SK-N-SH (cell line): ENCODE measurements at regions of chr1 and their contacts with region 1.

Region 1: GRCh38 chr1:109099938-109100773 is 9.6 kb downstream of the TMEM167B start:
- DNase-seq: peak; percentile 96
- H3K4me3 ChIP-seq: peak overlapping the region; percentile 71 to 81
- H3K27ac ChIP-seq: peak overlapping the region; percentile 86 to 92
- H3K4me1 ChIP-seq: no peaks in the 10 kb centered on the region; a peak in 1 of 4 replicates
- H3K27me3 ChIP-seq: no peaks in the 10 kb centered on the region
- CTCF ChIP-seq: peak; percentile 85
- EP300 ChIP-seq: peak; percentile 3 to 64; a peak in 3 of 4 replicates
- RAD21 ChIP-seq: peak; percentile 58

Region 2: GRCh38 chr1:108691942-108692723 is 408.0 kb before region 1 on chr1 and contains the start of gene PRPF38B:
- CTCF ChIA-PET with region 1: interaction called, 6 read pairs
- POLR2A ChIA-PET with region 1: interaction called, 13 read pairs
- DNase-seq: peak; percentile 93
- H3K4me3 ChIP-seq: peak within 1 kb of the TSS; percentile 97 to 98
- H3K27ac ChIP-seq: peak within 1 kb of the TSS; percentile 96 to 99
- H3K4me1 ChIP-seq: peaks cover 11 to 16% of the 10 kb centered on the region in 2 experiments; a peak in 3 of 4 replicates
- H3K27me3 ChIP-seq: no peaks in the 10 kb centered on the region
- CTCF ChIP-seq: no peak
- EP300 ChIP-seq: no peak
- RAD21 ChIP-seq: no peak; the same call in 1 of the 2 replicates
- polyA plus RNA-seq, gene PRPF38B: 17.5 and 22.3 TPM in 2 replicates

Region 3: DNA sequence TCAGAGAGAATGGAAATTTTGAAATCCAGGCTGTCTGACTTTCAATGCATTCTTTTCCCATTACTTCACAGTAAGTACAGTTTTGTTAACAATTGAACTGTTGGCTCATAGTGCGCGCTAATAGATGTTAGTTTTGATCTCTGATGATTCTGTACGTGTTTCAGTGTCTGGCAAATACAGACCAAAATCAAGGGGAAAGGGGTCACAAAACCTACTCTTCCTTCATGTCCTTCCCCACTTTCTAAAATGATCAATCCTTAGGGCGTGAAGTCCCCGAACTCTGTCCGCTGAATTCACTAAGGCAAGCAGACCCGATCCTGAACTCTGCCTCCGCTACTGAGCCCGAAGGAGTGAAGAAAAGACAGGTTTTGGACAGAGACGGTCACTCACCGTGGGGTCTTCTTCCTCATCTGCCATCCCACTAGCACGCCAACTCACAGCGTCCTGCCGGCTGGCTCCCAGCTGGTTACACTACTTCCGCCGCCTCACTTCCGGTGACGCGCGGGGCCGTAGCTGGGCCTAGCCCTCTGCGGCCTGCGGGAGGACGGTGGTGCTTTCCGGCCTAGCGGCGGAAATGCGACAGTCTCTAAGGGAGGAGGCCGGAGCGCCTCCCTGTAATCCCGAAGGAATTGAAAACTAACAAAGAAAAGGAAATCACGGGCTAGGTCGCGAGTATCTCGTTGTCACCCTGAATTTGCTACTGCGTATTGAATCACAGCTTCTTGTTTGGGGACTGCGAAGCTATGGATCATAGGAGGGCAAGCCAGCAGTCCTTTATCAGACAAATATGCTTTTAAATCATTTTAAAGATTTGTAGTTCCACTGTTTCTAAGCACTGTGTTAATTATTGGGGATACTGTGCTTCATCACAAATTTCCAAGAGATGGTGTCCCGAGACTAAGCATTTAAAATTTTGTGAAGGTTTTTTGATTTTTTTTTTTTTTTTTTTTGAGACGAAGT is 24.3 kb before region 1 on chr1 and contains the start of gene TAF13:
- CTCF ChIA-PET with region 1: interaction called, 6 read pairs
- POLR2A ChIA-PET with region 1: interaction called, 28 read pairs
- DNase-seq: peak; percentile 96
- H3K4me3 ChIP-seq: peak within 1 kb of the TSS; percentile 81 to 83
- H3K27ac ChIP-seq: peak within 1 kb of the TSS; percentile 95 to 97
- H3K4me1 ChIP-seq: no peaks in the 10 kb centered on the region; a peak in 2 of 4 replicates
- H3K27me3 ChIP-seq: no peaks in the 10 kb centered on the region
- CTCF ChIP-seq: peak; percentile 22
- EP300 ChIP-seq: peak in 1 of 2 experiments; percentile 19; a peak in 1 of 4 replicates
- RAD21 ChIP-seq: no peak
- polyA plus RNA-seq, gene TAF13: 16.0 and 21.9 TPM in 2 replicates

Region 4: GRCh38 chr1:109112652-109113285 is 12.6 kb after region 1 on chr1:
- CTCF ChIA-PET with region 1: interaction called, 75 read pairs
- POLR2A ChIA-PET with region 1: interaction called, 19 read pairs
- DNase-seq: peak; percentile 93
- H3K4me3 ChIP-seq: peak overlapping the region; percentile 37 to 57
- H3K27ac ChIP-seq: no peak overlapping the region
- H3K4me1 ChIP-seq: peaks cover 4 to 13% of the 10 kb centered on the region in 2 experiments; a peak in 1 of 4 replicates
- H3K27me3 ChIP-seq: peaks cover 16% of the 10 kb centered on the region
- CTCF ChIP-seq: peak; percentile 96
- EP300 ChIP-seq: no peak
- RAD21 ChIP-seq: peak; percentile 74

Region 5: GRCh38 chr1:109248797-109249642 is 148.9 kb after region 1 on chr1 and contains the start of gene CELSR2:
- CTCF ChIA-PET with region 1: interaction called, 8 read pairs
- POLR2A ChIA-PET with region 1: interaction called, 11 read pairs
- DNase-seq: peak; percentile 95
- H3K4me3 ChIP-seq: peak within 1 kb of the TSS; percentile 58 to 70
- H3K27ac ChIP-seq: peak within 1 kb of the TSS in 1 of 2 experiments; percentile 62; a peak in 1 of 4 replicates
- H3K4me1 ChIP-seq: peaks cover 0 to 31% of the 10 kb centered on the region in 2 experiments; a peak in 1 of 4 replicates
- H3K27me3 ChIP-seq: no peaks in the 10 kb centered on the region
- CTCF ChIP-seq: no peak; the same call in 1 of the 2 replicates
- EP300 ChIP-seq: no peak
- RAD21 ChIP-seq: no peak
- polyA plus RNA-seq, gene CELSR2: 1.7 and 3.5 TPM in 2 replicates